SK-N-SH (cell line): ENCODE measurements at regions of chr7 and their contacts with region 1.

Region 1: GRCh38 chr7:99340659-99341058 is 15.0 kb downstream of the ARPC1A start:
- DNase-seq: no peak
- H3K4me3 ChIP-seq: no peak overlapping the region
- H3K27ac ChIP-seq: no peak overlapping the region
- H3K4me1 ChIP-seq: no peaks in the 10 kb centered on the region
- H3K27me3 ChIP-seq: no peaks in the 10 kb centered on the region
- CTCF ChIP-seq: no peak
- EP300 ChIP-seq: no peak
- RAD21 ChIP-seq: no peak

Region 2: GRCh38 chr7:99325545-99326407 is 14.9 kb before region 1 on chr7 and contains the start of gene ARPC1A:
- CTCF ChIA-PET with region 1: interaction called, 13 read pairs
- POLR2A ChIA-PET with region 1: no interaction called
- DNase-seq: peak; percentile 100
- H3K4me3 ChIP-seq: peak within 1 kb of the TSS; percentile 81 to 98
- H3K27ac ChIP-seq: peak within 1 kb of the TSS; percentile 58 to 87; a peak in 3 of 4 replicates
- H3K4me1 ChIP-seq: peaks cover 6 to 9% of the 10 kb centered on the region in 2 experiments; a peak in 3 of 4 replicates
- H3K27me3 ChIP-seq: no peaks in the 10 kb centered on the region
- CTCF ChIP-seq: peak; percentile 46
- EP300 ChIP-seq: peak in 1 of 2 experiments; percentile 32; a peak in 1 of 4 replicates
- RAD21 ChIP-seq: peak; percentile 9; the same call in 1 of the 2 replicates
- polyA plus RNA-seq, gene ARPC1A: 262 and 306 TPM in 2 replicates

Region 3: GRCh38 chr7:99374103-99375064 is 33.7 kb after region 1 on chr7 and contains the start of gene ARPC1B:
- CTCF ChIA-PET with region 1: no interaction called
- POLR2A ChIA-PET with region 1: no interaction called
- DNase-seq: peak; percentile 99
- H3K4me3 ChIP-seq: peak within 1 kb of the TSS; percentile 55 to 93
- H3K27ac ChIP-seq: peak within 1 kb of the TSS; percentile 12 to 45; a peak in 3 of 4 replicates
- H3K4me1 ChIP-seq: peaks cover 3 to 17% of the 10 kb centered on the region in 2 experiments; a peak in 2 of 4 replicates
- H3K27me3 ChIP-seq: no peaks in the 10 kb centered on the region
- CTCF ChIP-seq: no peak
- EP300 ChIP-seq: no peak
- RAD21 ChIP-seq: no peak
- polyA plus RNA-seq, gene ARPC1B: 549 and 836 TPM in 2 replicates